H1 (cell line): ENCODE measurements at regions of chr6 and their contacts with region 1.

Region 1: DNA sequence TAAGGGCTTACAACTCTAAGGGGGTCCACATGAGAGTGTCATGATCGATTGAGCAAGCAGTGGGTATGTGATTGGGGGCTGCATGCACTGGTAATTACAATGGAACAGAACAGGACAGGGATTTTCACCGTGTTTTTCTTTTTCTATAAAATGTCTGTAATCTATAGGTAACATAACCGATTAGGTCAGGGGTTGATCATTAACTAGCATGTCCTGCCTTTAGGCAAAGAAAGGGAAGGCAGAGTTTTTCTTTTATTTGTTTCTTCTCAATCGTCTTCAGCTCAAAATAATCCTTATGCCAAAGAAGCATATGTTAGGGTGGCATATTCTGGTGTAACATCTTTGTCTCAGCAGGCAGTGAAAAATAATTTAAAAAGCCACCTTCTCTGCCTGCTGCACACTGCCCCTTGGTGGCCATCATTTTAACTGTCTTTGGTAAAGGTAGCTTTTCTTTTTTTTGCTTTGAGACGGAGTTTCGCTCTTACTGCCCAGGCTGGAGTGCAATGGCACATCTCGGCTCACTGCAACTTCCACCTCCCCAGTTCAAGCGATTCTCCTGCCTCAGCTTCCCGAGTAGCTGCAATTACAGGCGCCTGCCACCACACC is 9.7 kb upstream of the CEP43 start:
- DNase-seq: no peak
- H3K4me3 ChIP-seq: no peak overlapping the region
- H3K27ac ChIP-seq: no peak overlapping the region
- H3K4me1 ChIP-seq: peaks cover 8 to 13% (median 11%) of the 10 kb centered on the region in 4 experiments; a peak in 6 of 7 replicates
- H3K27me3 ChIP-seq: no peaks in the 10 kb centered on the region
- CTCF ChIP-seq: peak in 2 of 3 experiments; percentile 38 to 54; a peak in 3 of 4 replicates
- EP300 ChIP-seq: no peak
- POLR2A ChIP-seq: no peak
- RAD21 ChIP-seq: peak; percentile 62

Region 2: GRCh38 chr6:166786704-166787293 is 202.7 kb before region 1 on chr6:
- CTCF ChIA-PET with region 1: interaction called, 17 read pairs
- POLR2A ChIA-PET with region 1: no interaction called
- DNase-seq: no peak
- H3K4me3 ChIP-seq: no peak overlapping the region
- H3K27ac ChIP-seq: no peak overlapping the region
- H3K4me1 ChIP-seq: no peaks in the 10 kb centered on the region
- H3K27me3 ChIP-seq: no peaks in the 10 kb centered on the region
- CTCF ChIP-seq: peak in 2 of 3 experiments; percentile 53 to 58; a peak in 2 of 4 replicates
- EP300 ChIP-seq: no peak
- POLR2A ChIP-seq: no peak
- RAD21 ChIP-seq: peak; percentile 82 to 83

Region 3: GRCh38 chr6:166862287-166862977 is 127.1 kb before region 1 on chr6:
- CTCF ChIA-PET with region 1: interaction called, 10 read pairs
- POLR2A ChIA-PET with region 1: no interaction called
- DNase-seq: peak; percentile 41 to 81
- H3K4me3 ChIP-seq: peak overlapping the region; percentile 52 to 73 (median 64)
- H3K27ac ChIP-seq: no peak overlapping the region
- H3K4me1 ChIP-seq: peaks cover 0 to 5% (median 0%) of the 10 kb centered on the region in 4 experiments; a peak in 3 of 7 replicates
- H3K27me3 ChIP-seq: peaks cover 0 to 10% (median 3%) of the 10 kb centered on the region in 4 experiments; a peak in 3 of 7 replicates
- CTCF ChIP-seq: peak in 1 of 3 experiments; percentile 15; a peak in 1 of 4 replicates
- EP300 ChIP-seq: no peak
- POLR2A ChIP-seq: peak in 1 of 2 experiments; percentile 46; a peak in 1 of 3 replicates
- RAD21 ChIP-seq: peak in 1 of 2 experiments; percentile 13; a peak in 1 of 4 replicates

Region 4: GRCh38 chr6:166922937-166923336 is 66.6 kb before region 1 on chr6:
- CTCF ChIA-PET with region 1: no interaction called
- POLR2A ChIA-PET with region 1: no interaction called
- DNase-seq: no peak
- H3K4me3 ChIP-seq: no peak overlapping the region
- H3K27ac ChIP-seq: no peak overlapping the region
- H3K4me1 ChIP-seq: no peaks in the 10 kb centered on the region
- H3K27me3 ChIP-seq: no peaks in the 10 kb centered on the region
- CTCF ChIP-seq: no peak
- EP300 ChIP-seq: no peak
- POLR2A ChIP-seq: no peak
- RAD21 ChIP-seq: no peak

Region 5: GRCh38 chr6:166956444-166957086 is 33.0 kb before region 1 on chr6 and contains the start of gene RNASET2:
- CTCF ChIA-PET with region 1: interaction called, 18 read pairs
- POLR2A ChIA-PET with region 1: interaction called, 5 read pairs
- DNase-seq: peak in 1 of 2 experiments; percentile 100
- H3K4me3 ChIP-seq: peak within 1 kb of the TSS; percentile 58 to 83 (median 72)
- H3K27ac ChIP-seq: no peak within 1 kb of the TSS
- H3K4me1 ChIP-seq: peaks cover 2 to 12% (median 5%) of the 10 kb centered on the region in 4 experiments; a peak in 6 of 7 replicates
- H3K27me3 ChIP-seq: peaks cover 0 to 6% (median 0%) of the 10 kb centered on the region in 4 experiments; a peak in 3 of 7 replicates
- CTCF ChIP-seq: no peak
- EP300 ChIP-seq: no peak
- POLR2A ChIP-seq: no peak; a peak in 1 of 3 replicates
- RAD21 ChIP-seq: no peak
- total RNA-seq, gene RNASET2: 20.8 and 22.9 TPM in 2 replicates